Caco-2 (cell line): ENCODE measurements at regions of chr11 and their contacts with region 1.

Region 1: GRCh38 chr11:65440831-65441499 is 18.4 kb downstream of the NEAT1 start:
- DNase-seq: no peak
- H3K4me3 ChIP-seq: no peak overlapping the region
- H3K4me3 Mint-ChIP-seq: peak overlapping the region; percentile 20
- H3K27ac Mint-ChIP-seq: peak overlapping the region; percentile 91
- H3K4me1 ChIP-seq: peaks cover 37% of the 10 kb centered on the region
- H3K4me1 Mint-ChIP-seq: peaks cover 47% of the 10 kb centered on the region
- H3K27me3 ChIP-seq: no peaks in the 10 kb centered on the region
- H3K27me3 Mint-ChIP-seq: no peaks in the 10 kb centered on the region
- CTCF ChIP-seq: no peak

Region 2: GRCh38 chr11:65169164-65169641 is 271.8 kb before region 1 on chr11:
- CTCF ChIA-PET with region 1: no interaction called
- POLR2A ChIA-PET with region 1: no interaction called
- intact Hi-C with region 1: no loop called
- DNase-seq: no peak
- H3K4me3 ChIP-seq: no peak overlapping the region
- H3K4me3 Mint-ChIP-seq: no peak overlapping the region
- H3K27ac Mint-ChIP-seq: peak overlapping the region; percentile 7
- H3K4me1 ChIP-seq: no peaks in the 10 kb centered on the region
- H3K4me1 Mint-ChIP-seq: peaks cover 8% of the 10 kb centered on the region
- H3K27me3 ChIP-seq: no peaks in the 10 kb centered on the region
- H3K27me3 Mint-ChIP-seq: no peaks in the 10 kb centered on the region
- CTCF ChIP-seq: no peak

Region 3: GRCh38 chr11:65454696-65455456 is 13.9 kb after region 1 on chr11:
- CTCF ChIA-PET with region 1: no interaction called
- POLR2A ChIA-PET with region 1: interaction called, 3 read pairs
- intact Hi-C with region 1: loop called (anchors 2 kb)
- DNase-seq: peak; percentile 92 to 94
- H3K4me3 ChIP-seq: peak overlapping the region; percentile 41
- H3K4me3 Mint-ChIP-seq: peak overlapping the region; percentile 87
- H3K27ac Mint-ChIP-seq: peak overlapping the region; percentile 73
- H3K4me1 ChIP-seq: 0 out of 2 replicates have a peak, but pooled peaks cover 3% of the 10 kb centered on the region
- H3K4me1 Mint-ChIP-seq: peaks cover 29% of the 10 kb centered on the region
- H3K27me3 ChIP-seq: no peaks in the 10 kb centered on the region
- H3K27me3 Mint-ChIP-seq: no peaks in the 10 kb centered on the region
- CTCF ChIP-seq: peak in 1 of 2 experiments; percentile 37